ENCODE measurements at regions of chr12 and their contacts with region 1.

Region 1: GRCh38 chr12:69254046-69254445 is 14.7 kb downstream of the CPSF6 start:
- DNase-seq: no peak
- H3K4me3 Mint-ChIP-seq: no peak overlapping the region
- H3K27ac Mint-ChIP-seq: peak overlapping the region; percentile 54
- H3K4me1 Mint-ChIP-seq: peaks cover 36% of the 10 kb centered on the region
- H3K27me3 Mint-ChIP-seq: no peaks in the 10 kb centered on the region

Region 2: DNA sequence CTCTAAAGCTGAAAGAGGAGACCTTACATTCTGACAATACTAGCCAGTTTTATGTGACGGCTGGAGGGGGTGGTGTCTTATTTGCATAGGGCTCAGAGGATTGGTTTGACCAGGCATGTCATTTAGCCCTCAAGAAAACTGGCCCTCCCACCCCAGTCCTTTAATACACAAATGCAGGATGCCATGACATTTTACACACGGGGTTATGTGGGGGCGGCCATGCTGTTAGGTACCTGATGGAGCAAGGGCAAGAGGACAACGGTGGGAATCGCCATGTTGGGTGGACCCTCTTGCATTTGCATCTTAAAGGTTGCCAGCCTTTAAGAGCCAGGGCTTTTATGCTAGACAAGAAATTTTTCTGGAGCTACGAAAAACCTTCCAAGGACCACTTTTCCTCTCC is 422.8 kb before region 1 on chr12:
- intact Hi-C with region 1: loop called (anchors 10 kb)
- DNase-seq: no peak
- H3K4me3 Mint-ChIP-seq: no peak overlapping the region
- H3K27ac Mint-ChIP-seq: no peak overlapping the region
- H3K4me1 Mint-ChIP-seq: peaks cover 13% of the 10 kb centered on the region
- H3K27me3 Mint-ChIP-seq: no peaks in the 10 kb centered on the region

Region 3: DNA sequence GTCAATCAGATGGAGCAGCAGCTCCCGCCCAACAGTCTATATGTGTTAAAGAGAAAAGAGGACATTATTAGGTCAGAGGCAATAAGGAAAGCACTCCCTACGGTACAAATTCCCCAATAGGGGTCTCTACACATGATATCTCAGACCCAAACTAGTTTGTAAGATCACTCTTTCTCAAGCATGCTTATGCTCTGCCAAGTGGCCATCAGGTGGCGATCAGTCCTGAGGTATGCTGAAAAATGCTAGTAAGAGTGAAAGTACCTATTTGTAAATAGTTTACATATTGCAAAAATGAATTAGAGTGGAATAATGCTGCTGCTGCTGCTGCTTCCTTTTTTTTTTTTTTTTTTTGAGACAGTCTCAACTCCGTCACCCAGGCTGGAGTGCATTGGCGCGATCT is 382.1 kb before region 1 on chr12:
- intact Hi-C with region 1: loop called (anchors 10 kb)
- DNase-seq: no peak
- H3K4me3 Mint-ChIP-seq: no peak overlapping the region
- H3K27ac Mint-ChIP-seq: no peak overlapping the region
- H3K4me1 Mint-ChIP-seq: peaks cover 13% of the 10 kb centered on the region
- H3K27me3 Mint-ChIP-seq: no peaks in the 10 kb centered on the region